PC-9 (cell line): ENCODE measurements at regions of chr12 and their contacts with region 1.

Region 1: DNA sequence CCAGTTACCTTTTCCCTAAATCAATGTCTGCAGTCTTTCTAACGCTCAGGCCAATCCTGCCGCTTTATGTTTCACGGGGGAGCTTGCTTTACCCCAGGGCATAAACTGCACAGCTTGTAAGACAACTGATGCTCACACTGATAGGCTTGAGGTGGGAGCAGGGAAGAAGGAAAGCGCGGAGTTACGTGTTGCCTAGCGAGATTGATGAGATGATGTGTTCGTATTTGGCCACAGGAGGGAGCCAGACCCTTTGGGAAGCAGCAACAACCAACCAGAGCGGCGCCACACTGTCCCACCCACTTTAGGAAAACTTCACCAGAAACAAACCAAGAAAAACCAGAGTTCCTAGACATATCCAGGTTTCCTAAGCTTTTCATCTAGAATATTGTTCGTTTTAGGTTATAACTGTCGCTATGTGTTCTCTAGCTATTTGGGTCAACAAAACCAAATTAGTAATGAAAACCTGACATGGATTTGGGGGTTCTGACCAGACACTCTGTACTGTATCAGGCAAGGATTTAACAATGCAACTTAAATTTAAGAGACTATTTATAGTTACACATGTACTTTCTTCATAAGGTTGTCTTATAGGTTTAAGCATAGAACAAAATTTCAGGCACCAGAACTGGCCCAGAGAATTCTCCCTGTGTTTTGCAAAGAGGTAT is 2.4 kb downstream of the IL26 start:
- DNase-seq: peak; percentile 62 to 70
- H3K4me3 ChIP-seq: no peak overlapping the region
- H3K27ac ChIP-seq: no peak overlapping the region
- H3K4me1 ChIP-seq: 0 out of 2 replicates have a peak, but pooled peaks cover 11% of the 10 kb centered on the region
- H3K27me3 ChIP-seq: no peaks in the 10 kb centered on the region
- CTCF ChIP-seq: peak; percentile 89

Region 2: DNA sequence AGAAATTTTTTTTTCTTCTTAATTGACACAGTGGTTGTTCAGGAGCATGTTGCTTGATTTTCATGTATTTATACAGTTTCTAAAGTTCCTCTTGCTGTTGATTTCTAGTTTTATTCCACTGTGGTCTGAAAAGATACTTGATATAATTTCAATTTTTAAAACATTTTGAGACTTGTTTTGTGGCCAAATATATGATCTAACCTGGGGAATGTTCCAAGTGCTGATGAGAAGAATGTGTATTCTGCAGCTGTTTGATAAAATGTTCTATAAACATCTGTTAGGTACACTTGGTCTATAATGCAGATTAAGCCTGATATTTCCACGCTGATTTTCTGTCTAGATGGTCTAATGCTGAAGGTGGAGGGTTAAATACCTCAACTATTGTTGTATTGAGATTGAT is 385.3 kb before region 1 on chr12:
- CTCF ChIA-PET with region 1: no interaction called
- POLR2A ChIA-PET with region 1: no interaction called
- intact Hi-C with region 1: no loop called
- DNase-seq: no peak
- H3K4me3 ChIP-seq: no peak overlapping the region
- H3K27ac ChIP-seq: no peak overlapping the region
- H3K4me1 ChIP-seq: no peaks in the 10 kb centered on the region
- H3K27me3 ChIP-seq: no peaks in the 10 kb centered on the region
- CTCF ChIP-seq: no peak

Region 3: DNA sequence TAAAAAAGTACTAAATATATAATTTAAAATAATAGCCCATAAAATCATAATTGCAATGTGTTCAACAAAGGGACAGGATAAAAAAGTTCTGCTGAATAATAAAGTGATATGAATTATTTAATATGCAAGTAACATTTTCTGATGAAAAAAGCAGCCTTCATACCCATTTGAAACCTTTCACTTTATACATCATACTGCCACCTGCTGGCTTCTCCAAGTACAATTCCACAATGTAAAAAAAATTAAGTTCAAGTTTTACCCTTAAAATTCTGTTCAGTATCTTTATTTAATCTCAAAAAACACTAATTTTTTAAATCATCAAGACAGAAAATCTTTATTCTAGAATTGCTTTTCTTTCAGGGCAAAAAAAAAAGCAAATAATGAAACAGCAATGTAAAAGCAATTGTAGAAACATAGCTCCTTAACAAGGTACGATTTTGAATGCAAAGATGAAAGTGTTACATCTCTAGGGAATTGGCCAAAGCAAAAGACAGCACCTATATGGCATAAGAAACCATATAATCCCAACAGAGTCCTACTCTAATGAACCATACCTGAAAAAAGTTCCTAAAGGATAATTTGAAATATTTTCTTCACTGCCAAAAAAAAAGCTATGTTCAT is 93.9 kb after region 1 on chr12:
- CTCF ChIA-PET with region 1: interaction called, 14 read pairs
- POLR2A ChIA-PET with region 1: no interaction called
- intact Hi-C with region 1: loop called (anchors 1 kb)
- DNase-seq: peak in 1 of 2 experiments; percentile 2
- H3K4me3 ChIP-seq: no peak overlapping the region
- H3K27ac ChIP-seq: no peak overlapping the region
- H3K4me1 ChIP-seq: no peaks in the 10 kb centered on the region
- H3K27me3 ChIP-seq: no peaks in the 10 kb centered on the region
- CTCF ChIP-seq: peak; percentile 79